CD8-positive, alpha-beta T cell (primary cell): ENCODE measurements at regions of chr12 and their contacts with region 1.

Region 1: DNA sequence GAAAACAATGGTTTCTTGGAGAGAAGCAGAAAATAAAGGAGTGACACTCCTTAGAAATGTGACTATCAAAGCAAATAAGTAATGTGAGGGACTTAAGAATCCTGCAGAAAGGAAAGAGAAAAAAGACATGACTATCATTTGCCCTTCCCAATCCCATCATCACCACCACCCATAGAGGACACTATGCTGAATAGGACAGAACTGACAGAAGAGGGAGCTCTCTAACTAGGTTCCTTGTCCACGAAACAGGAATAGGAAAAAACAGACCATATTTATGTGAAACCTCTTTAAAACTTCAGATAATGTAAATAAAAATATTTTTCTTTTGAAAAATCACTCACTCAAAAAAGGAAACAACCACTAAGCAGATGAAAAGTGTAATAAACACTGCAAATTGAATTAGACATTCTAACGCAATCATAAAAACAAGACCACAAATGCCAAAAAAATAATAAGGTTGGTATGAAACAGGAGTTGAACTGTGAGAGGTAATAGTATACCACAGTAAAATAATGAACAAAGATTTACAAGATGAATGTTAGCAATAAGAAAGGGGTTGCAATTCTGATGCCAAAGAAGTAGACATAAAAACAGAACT is 24.1 kb downstream of the KLRD1 start:
- DNase-seq: peak in 3 of 9 experiments; percentile 8 to 77 (median 63)
- ATAC-seq: no peak
- H3K4me3 ChIP-seq: no peak overlapping the region
- H3K4me3 Mint-ChIP-seq: peak overlapping the region; percentile 26
- H3K27ac ChIP-seq: no peak overlapping the region
- H3K27ac Mint-ChIP-seq: no peak overlapping the region
- H3K4me1 ChIP-seq: peaks cover 6% of the 10 kb centered on the region
- H3K4me1 Mint-ChIP-seq: peaks cover 10% of the 10 kb centered on the region
- H3K27me3 ChIP-seq: no peaks in the 10 kb centered on the region
- H3K27me3 Mint-ChIP-seq: no peaks in the 10 kb centered on the region
- CTCF ChIP-seq: peak; percentile 51

Region 2: DNA sequence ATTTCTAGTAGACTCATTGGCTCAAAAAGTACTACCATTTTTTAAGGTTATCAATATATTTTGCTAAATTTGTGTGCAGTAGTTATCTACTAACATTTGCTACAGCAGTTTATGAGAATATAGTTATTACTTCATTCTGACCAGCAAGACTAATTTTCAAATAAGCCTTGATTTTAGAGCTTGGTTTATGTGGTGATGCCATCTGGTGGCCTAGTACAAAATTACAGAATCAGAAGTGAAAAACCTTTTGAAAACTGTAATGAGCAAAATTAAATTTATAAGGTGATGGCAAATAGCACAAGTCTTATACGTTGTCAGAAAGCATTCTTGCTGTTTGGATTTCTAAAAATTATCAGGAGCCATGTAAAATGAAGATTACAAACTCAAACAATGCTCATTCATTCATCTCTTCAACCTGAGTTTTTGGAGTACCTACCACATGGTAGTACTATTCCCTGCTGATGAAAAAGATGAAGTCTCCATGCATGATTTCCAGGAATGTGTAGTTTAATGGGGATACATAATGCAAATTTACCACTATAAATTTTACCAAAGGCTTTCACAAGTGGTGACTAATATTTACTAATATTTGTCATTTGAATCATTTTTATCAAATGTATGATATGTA is 230.7 kb after region 1 on chr12:
- CTCF ChIA-PET with region 1: interaction called, 10 read pairs
- POLR2A ChIA-PET with region 1: no interaction called
- intact Hi-C with region 1: loop called (anchors 1 kb)
- DNase-seq: peak in 4 of 9 experiments; percentile 29 to 79 (median 62)
- ATAC-seq: no peak
- H3K4me3 ChIP-seq: no peak overlapping the region
- H3K4me3 Mint-ChIP-seq: peak overlapping the region; percentile 11
- H3K27ac ChIP-seq: no peak overlapping the region
- H3K27ac Mint-ChIP-seq: peak overlapping the region; percentile 80
- H3K4me1 ChIP-seq: peaks cover 70% of the 10 kb centered on the region
- H3K4me1 Mint-ChIP-seq: peaks cover 83% of the 10 kb centered on the region
- H3K27me3 ChIP-seq: no peaks in the 10 kb centered on the region
- H3K27me3 Mint-ChIP-seq: no peaks in the 10 kb centered on the region
- CTCF ChIP-seq: peak; percentile 98